Common myeloid progenitor, CD34-positive (primary cell): ENCODE measurements at regions of chr6 and their contacts with region 1.

Region 1: GRCh38 chr6:3442431-3443220 is 14.2 kb downstream of the SLC22A23 start:
- DNase-seq: peak; percentile 35 to 67 (median 41)
- H3K4me3 ChIP-seq: no peak overlapping the region
- H3K27ac ChIP-seq: no peak overlapping the region
- H3K4me1 ChIP-seq: no peaks in the 10 kb centered on the region
- H3K27me3 ChIP-seq: peaks cover 0 to 4% (median 0%) of the 10 kb centered on the region in 5 experiments

Region 2: GRCh38 chr6:3356056-3356761 is 86.4 kb before region 1 on chr6:
- CTCF ChIA-PET with region 1: no interaction called
- POLR2A ChIA-PET with region 1: no interaction called
- DNase-seq: peak; percentile 91 to 95 (median 95)
- H3K4me3 ChIP-seq: peak overlapping the region; percentile 18 to 82 (median 61)
- H3K27ac ChIP-seq: peak overlapping the region; percentile 31 to 89
- H3K4me1 ChIP-seq: peaks cover 4 to 18% (median 13%) of the 10 kb centered on the region in 4 experiments
- H3K27me3 ChIP-seq: no peaks in the 10 kb centered on the region

Region 3: DNA sequence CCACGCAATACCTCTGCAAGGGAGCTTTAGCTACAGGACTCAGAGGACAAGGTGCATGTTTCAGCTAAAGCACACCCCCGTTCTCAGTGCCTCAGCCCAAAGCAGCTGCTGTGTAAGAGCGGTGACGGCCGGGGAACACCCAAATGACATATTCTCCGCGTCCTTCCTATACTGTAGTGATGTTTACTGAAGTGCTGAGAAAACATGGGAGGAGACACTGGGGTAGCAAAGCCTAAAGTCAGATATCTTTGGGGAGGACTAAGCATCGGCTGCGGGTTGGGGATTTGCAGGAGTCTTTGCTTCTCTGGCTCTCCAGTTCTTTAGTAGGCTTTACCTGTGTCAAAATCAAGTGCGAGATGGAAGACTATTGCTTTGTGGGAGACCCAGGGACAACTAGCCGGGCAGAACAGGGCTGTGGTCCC is 12.5 kb after region 1 on chr6:
- CTCF ChIA-PET with region 1: interaction called, 16 read pairs
- POLR2A ChIA-PET with region 1: interaction called, 3 read pairs
- DNase-seq: peak in 2 of 3 donors; percentile 49 to 52
- H3K4me3 ChIP-seq: peak overlapping the region in 4 of 7 experiments; percentile 34 to 78 (median 65)
- H3K27ac ChIP-seq: no peak overlapping the region
- H3K4me1 ChIP-seq: peaks cover 0 to 23% (median 18%) of the 10 kb centered on the region in 4 experiments
- H3K27me3 ChIP-seq: peaks cover 9 to 52% (median 26%) of the 10 kb centered on the region in 5 experiments